ENCODE measurements at regions of chr6 and their contacts with region 1.

Region 1: DNA sequence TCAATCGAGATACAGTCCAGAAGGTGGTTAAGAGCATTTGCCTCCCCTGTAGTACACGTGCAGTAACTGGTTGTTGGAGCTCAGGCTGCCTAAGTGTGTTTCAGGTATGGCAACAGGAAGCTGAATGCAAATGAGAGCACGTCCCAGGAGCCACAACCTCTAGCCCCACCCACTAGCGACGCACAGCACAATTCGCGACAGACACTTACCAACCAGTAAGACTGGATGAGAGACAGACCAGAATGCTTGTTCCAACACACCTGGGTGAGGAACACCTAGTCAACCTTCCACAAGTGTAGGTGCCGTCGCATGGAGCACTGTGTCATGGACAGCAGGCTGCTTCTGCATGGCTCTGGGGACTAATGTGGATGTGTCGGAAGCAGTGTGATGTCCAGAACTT is 7.2 kb upstream of the SERPINB1 start:
- DNase-seq: no peak
- ATAC-seq: peak; percentile 36
- H3K4me3 ChIP-seq: no peak overlapping the region
- H3K27ac ChIP-seq: no peak overlapping the region
- H3K4me1 ChIP-seq: peaks cover 17% of the 10 kb centered on the region
- H3K27me3 ChIP-seq: no peaks in the 10 kb centered on the region
- CTCF ChIP-seq: no peak
- EP300 ChIP-seq: no peak
- POLR2A ChIP-seq: no peak
- RAD21 ChIP-seq: no peak

Region 2: DNA sequence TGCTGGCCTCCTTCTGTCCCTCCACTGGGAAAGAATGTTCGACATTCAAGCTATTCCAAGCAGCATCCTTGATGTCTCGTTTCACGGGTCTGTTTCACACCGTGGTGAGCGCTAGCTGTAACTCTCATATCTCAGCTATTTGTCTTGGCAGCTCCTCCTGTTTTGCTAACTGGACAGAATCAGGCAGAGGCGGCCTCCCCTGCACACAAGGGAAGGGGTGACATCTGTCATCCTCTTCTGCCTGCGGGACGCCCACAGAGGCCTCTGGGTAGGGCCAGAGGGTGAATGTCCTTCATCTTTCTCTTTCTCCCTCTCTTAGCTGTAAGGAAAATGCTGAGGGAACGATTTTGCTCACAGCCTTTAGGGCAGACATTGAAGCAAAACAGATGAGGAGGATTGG is 370.7 kb before region 1 on chr6:
- CTCF ChIA-PET with region 1: no interaction called
- POLR2A ChIA-PET with region 1: no interaction called
- RAD21 ChIA-PET with region 1: no interaction called
- SMC1A ChIA-PET with region 1: no interaction called
- in situ Hi-C with region 1: no loop called
- intact Hi-C with region 1: no loop called
- DNase-seq: no peak
- ATAC-seq: no peak
- H3K4me3 ChIP-seq: no peak overlapping the region
- H3K27ac ChIP-seq: no peak overlapping the region
- H3K4me1 ChIP-seq: no peaks in the 10 kb centered on the region
- H3K27me3 ChIP-seq: no peaks in the 10 kb centered on the region; a peak in 2 of 4 replicates
- CTCF ChIP-seq: no peak
- EP300 ChIP-seq: no peak
- POLR2A ChIP-seq: no peak
- RAD21 ChIP-seq: no peak

Region 3: GRCh38 chr6:2791124-2791974 is 57.5 kb before region 1 on chr6:
- CTCF ChIA-PET with region 1: interaction called, 45 read pairs
- POLR2A ChIA-PET with region 1: no interaction called
- RAD21 ChIA-PET with region 1: interaction called, 33 read pairs
- SMC1A ChIA-PET with region 1: interaction called, 44 read pairs
- in situ Hi-C with region 1: no loop called
- intact Hi-C with region 1: loop called (anchors 1 kb)
- DNase-seq: peak; percentile 13
- ATAC-seq: peak; percentile 97
- H3K4me3 ChIP-seq: no peak overlapping the region
- H3K27ac ChIP-seq: no peak overlapping the region
- H3K4me1 ChIP-seq: peaks cover 7% of the 10 kb centered on the region
- H3K27me3 ChIP-seq: no peaks in the 10 kb centered on the region
- CTCF ChIP-seq: peak; percentile 64 to 81 (median 67)
- EP300 ChIP-seq: no peak
- POLR2A ChIP-seq: no peak
- RAD21 ChIP-seq: peak; percentile 73

Region 4: DNA sequence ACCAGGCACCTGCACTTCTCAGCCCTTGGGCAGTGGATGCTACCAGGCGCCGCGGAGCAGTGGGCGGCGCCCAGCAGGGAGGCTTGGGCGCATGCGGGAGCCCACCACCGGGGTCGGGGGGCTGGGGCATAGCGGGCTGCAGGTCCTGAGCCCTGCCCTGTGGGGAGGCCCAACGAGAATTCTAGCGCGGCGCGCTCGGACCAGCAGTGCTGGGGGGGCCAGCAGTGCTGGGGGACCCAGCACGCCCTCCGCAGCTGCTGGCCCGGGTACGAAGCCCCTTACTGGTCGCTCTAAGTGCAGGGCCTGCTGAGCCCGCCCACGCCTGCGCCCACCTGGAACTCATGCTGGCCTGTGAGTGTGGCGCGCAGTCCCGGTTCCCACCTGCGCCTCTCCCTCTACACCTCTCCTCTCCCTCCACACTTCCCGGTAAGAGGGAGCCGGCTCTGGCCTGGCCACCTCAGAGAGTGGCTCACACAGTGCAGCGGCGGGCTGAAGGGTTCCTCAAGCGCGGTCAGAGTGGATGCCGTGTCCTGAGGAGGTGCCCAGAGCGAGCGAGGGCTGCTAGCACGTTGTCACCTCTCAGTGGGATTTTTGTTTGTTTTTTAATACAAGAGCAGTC is 21.3 kb after region 1 on chr6:
- CTCF ChIA-PET with region 1: interaction called, 57 read pairs
- POLR2A ChIA-PET with region 1: interaction called, 108 read pairs
- RAD21 ChIA-PET with region 1: interaction called, 92 read pairs
- SMC1A ChIA-PET with region 1: interaction called, 79 read pairs
- in situ Hi-C with region 1: no loop called
- intact Hi-C with region 1: loop called (anchors 1 kb)
- DNase-seq: no peak
- ATAC-seq: no peak
- H3K4me3 ChIP-seq: no peak overlapping the region
- H3K27ac ChIP-seq: no peak overlapping the region
- H3K4me1 ChIP-seq: peaks cover 41% of the 10 kb centered on the region
- H3K27me3 ChIP-seq: no peaks in the 10 kb centered on the region
- CTCF ChIP-seq: no peak
- EP300 ChIP-seq: no peak
- POLR2A ChIP-seq: no peak
- RAD21 ChIP-seq: no peak

Region 5: GRCh38 chr6:2900821-2901644 is 52.2 kb after region 1 on chr6:
- CTCF ChIA-PET with region 1: interaction called, 43 read pairs
- POLR2A ChIA-PET with region 1: interaction called, 8 read pairs
- RAD21 ChIA-PET with region 1: interaction called, 54 read pairs
- SMC1A ChIA-PET with region 1: interaction called, 103 read pairs
- in situ Hi-C with region 1: no loop called
- intact Hi-C with region 1: loop called (anchors 1 kb)
- DNase-seq: no peak
- ATAC-seq: peak; percentile 8
- H3K4me3 ChIP-seq: peak overlapping the region; percentile 57
- H3K27ac ChIP-seq: no peak overlapping the region
- H3K4me1 ChIP-seq: peaks cover 29% of the 10 kb centered on the region
- H3K27me3 ChIP-seq: no peaks in the 10 kb centered on the region; a peak in 1 of 4 replicates
- CTCF ChIP-seq: no peak
- EP300 ChIP-seq: no peak
- POLR2A ChIP-seq: 0 out of 2 replicates have a peak, but pooled peaks have one; percentile 1
- RAD21 ChIP-seq: no peak

Region 6: GRCh38 chr6:2931970-2932748 is 83.3 kb after region 1 on chr6:
- CTCF ChIA-PET with region 1: interaction called, 193 read pairs
- POLR2A ChIA-PET with region 1: interaction called, 16 read pairs
- RAD21 ChIA-PET with region 1: interaction called, 129 read pairs
- SMC1A ChIA-PET with region 1: interaction called, 151 read pairs
- in situ Hi-C with region 1: no loop called
- intact Hi-C with region 1: loop called (anchors 1 kb)
- DNase-seq: peak; percentile 60
- ATAC-seq: peak; percentile 99
- H3K4me3 ChIP-seq: no peak overlapping the region
- H3K27ac ChIP-seq: no peak overlapping the region
- H3K4me1 ChIP-seq: peaks cover 6% of the 10 kb centered on the region
- H3K27me3 ChIP-seq: peaks cover 0 to 4% of the 10 kb centered on the region in 2 experiments; a peak in 1 of 4 replicates
- CTCF ChIP-seq: peak; percentile 97 to 98 (median 97); a peak in 5 of 6 replicates
- EP300 ChIP-seq: no peak
- POLR2A ChIP-seq: no peak
- RAD21 ChIP-seq: peak; percentile 95

Region 7: DNA sequence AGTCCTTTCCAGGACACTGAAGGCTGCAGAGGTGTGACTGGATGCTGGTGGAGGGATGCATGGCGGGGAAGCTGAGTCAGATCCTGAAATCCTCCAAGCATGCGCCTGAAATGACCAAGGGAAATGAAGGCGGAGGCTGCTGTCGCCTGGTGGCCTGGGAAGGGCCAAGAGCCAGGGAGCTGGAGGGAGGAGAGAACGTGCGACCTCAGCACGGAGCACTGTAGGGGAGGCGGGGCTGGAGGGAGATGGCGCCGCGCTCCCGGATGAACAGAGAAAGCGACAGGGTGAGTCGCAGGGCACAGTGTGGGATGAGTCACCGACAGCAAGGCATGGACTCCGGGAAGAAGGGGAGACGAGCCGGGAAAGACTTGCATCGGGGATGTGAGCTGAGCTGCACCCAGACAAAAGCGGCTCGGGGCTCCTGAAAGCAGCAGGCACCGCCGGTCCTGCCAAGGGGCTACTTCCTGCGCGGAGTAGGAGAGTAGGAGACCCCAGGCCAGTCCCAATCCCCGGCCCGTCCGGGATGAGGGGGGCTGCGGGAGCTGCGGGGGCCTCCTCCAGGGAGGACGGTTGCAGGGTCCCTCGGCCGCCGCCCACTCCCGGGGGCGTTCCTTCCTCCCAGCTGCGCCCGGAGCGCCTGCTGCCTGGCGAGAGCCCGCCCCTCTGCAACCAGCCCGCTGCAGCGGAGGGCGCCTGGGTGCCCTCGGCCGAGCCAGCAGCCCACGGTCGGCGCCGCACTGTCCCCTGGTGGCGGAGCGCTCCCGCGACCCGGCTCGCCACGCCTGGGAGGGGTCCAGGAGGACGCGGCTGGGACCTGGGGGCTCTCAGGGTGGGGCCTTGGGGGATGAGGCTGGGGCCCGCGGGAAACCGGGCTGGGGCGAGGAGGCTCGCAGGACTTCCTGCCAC is 139.8 kb after region 1 on chr6:
- CTCF ChIA-PET with region 1: interaction called, 48 read pairs
- POLR2A ChIA-PET with region 1: interaction called, 4 read pairs
- RAD21 ChIA-PET with region 1: interaction called, 29 read pairs
- SMC1A ChIA-PET with region 1: interaction called, 56 read pairs
- in situ Hi-C with region 1: loop called (anchors 5 kb)
- intact Hi-C with region 1: loop called (anchors 1 kb)
- DNase-seq: no peak
- ATAC-seq: peak; percentile 92
- H3K4me3 ChIP-seq: peak overlapping the region; percentile 71
- H3K27ac ChIP-seq: peak overlapping the region; percentile 79
- H3K4me1 ChIP-seq: peaks cover 13% of the 10 kb centered on the region
- H3K27me3 ChIP-seq: peaks cover 0 to 2% of the 10 kb centered on the region in 2 experiments; a peak in 3 of 4 replicates
- CTCF ChIP-seq: peak; percentile 56 to 75 (median 73)
- EP300 ChIP-seq: no peak; a peak in 1 of 4 replicates
- POLR2A ChIP-seq: peak; percentile 64
- RAD21 ChIP-seq: peak; percentile 73

Region 8: DNA sequence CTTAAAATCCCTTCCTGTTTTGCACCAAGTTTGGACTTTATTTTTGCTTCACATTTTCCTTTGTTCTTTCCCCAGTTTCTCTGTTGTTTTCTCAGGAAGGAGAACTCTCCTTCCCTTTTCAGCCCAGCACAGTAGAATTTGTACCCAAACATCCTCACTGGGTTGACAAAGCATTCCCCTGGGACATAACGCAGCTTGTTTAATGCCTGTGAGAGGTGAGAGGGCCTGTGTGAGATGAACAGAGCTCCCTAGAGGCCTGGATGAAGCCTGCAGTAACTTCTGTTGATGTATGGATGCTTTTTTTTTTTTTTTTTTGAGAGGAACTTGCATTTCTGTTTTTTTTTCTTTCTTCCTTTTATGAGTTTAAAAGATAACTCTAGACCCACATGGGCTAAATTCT is 712.9 kb after region 1 on chr6:
- CTCF ChIA-PET with region 1: no interaction called
- POLR2A ChIA-PET with region 1: no interaction called
- RAD21 ChIA-PET with region 1: no interaction called
- SMC1A ChIA-PET with region 1: no interaction called
- in situ Hi-C with region 1: no loop called
- intact Hi-C with region 1: no loop called
- DNase-seq: no peak
- ATAC-seq: no peak
- H3K4me3 ChIP-seq: no peak overlapping the region
- H3K27ac ChIP-seq: no peak overlapping the region
- H3K4me1 ChIP-seq: no peaks in the 10 kb centered on the region
- H3K27me3 ChIP-seq: no peaks in the 10 kb centered on the region
- CTCF ChIP-seq: no peak
- EP300 ChIP-seq: no peak
- POLR2A ChIP-seq: no peak
- RAD21 ChIP-seq: no peak

Measured in GM12878 (cell line).